ENCODE measurements at regions of chr16 and their contacts with region 1.

Region 1: DNA sequence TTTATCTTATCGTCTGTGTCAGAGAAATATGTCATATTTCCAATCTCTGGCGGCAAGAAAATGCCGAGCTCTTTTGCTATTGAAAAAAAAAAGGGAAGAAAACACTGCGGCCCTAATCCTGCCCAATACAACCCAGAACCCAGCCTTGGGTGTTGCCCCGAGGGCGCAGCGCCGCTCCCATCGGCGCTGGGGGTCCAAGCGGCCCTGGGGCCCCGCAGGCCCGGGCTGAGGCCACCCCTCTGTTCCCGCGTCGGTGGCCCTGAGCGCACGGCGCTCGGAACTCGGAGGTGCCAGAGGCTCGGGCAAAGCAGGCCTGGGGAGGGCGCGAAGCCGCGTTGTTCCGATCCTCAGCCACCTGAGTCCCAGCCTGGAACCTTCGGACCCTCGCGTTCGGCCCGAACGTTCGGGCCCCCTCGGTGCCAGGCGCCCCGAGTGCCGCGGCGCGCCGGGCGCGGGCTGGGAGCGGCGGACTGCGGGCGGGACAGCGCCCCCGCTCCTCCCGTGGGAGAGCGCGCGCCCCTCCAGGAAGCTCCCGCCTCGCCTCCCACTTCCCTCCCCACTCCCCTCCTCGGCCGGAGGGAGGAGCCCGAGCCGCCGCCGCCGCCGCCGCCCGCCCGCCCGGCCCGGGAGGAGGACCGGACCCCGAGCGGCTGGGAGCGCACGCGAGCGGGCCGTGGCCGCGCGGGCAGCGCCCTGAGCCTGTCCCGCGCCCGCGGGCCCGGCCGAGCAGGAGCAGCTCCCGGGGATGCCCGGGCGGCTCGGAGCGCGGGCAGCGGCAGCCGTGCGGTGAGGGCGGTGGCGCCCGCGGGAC is at the start of gene CPNE2:
- DNase-seq: no peak
- H3K4me3 ChIP-seq: peak within 1 kb of the TSS; percentile 75 to 99 (median 87)
- H3K27ac ChIP-seq: peak within 1 kb of the TSS; percentile 81 to 88 (median 84)
- H3K4me1 ChIP-seq: peaks cover 15 to 40% (median 29%) of the 10 kb centered on the region in 4 donors
- H3K27me3 ChIP-seq: no peaks in the 10 kb centered on the region
- CTCF ChIP-seq: peak in 1 of 3 experiments; percentile 11
- EP300 ChIP-seq: no peak
- POLR2A ChIP-seq: no peak
- total RNA-seq, gene CPNE2: 21.6 to 43.0 (median 34.9) TPM

Region 2: DNA sequence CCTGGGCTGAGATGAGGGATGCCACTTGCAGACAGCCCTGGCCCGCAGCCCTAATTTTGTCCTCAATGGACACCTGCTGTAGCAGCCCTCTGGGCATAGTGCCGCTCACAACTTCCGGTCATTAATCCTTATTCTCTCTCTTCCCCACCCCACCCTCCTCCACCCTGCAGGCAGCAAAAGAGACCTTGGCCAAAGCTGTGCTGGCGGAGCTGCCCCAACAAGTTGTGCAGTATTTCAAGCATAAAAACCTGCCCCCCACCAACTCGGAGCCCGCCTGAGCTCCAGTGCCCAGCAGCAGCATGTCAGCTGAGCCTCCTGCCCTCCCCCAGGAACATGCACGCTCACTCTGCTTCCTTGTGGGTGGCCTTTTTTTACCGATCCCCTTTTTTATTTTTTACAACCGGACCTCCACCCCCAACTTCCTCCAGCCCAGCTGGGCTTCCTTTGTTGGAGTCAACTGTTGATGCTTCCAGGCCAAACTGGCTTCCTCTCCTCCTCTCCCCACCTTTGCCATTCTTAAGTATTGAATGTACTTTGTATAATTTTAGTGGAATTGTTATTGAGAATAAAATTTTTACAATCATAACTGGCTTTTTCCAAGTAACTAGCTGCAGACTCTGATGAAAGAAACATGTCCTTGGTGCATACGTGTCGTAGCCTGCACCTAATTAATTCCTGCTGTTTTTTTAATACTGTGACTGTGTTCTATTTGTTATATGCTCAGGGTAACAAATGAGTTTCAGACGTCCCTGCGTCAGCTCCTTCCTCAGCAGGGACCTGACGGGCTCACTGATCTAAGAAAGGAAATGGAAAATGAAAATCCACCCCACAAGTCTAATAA is 55.4 kb after region 1 on chr16:
- intact Hi-C with region 1: no loop called
- DNase-seq: no peak
- H3K4me3 ChIP-seq: no peak overlapping the region
- H3K27ac ChIP-seq: peak overlapping the region in 2 of 4 donors; percentile 17 to 38
- H3K4me1 ChIP-seq: peaks cover 44 to 59% (median 52%) of the 10 kb centered on the region in 4 donors
- H3K27me3 ChIP-seq: no peaks in the 10 kb centered on the region
- CTCF ChIP-seq: no peak
- EP300 ChIP-seq: no peak
- POLR2A ChIP-seq: no peak

Region 3: GRCh38 chr16:57244767-57245471 is 152.7 kb after region 1 on chr16 and contains the start of gene ARL2BP:
- intact Hi-C with region 1: loop called (anchors 10 kb)
- DNase-seq: peak; percentile 99
- H3K4me3 ChIP-seq: peak within 1 kb of the TSS; percentile 80 to 90 (median 82)
- H3K27ac ChIP-seq: peak within 1 kb of the TSS; percentile 92 to 95 (median 94)
- H3K4me1 ChIP-seq: peaks cover 13 to 23% (median 21%) of the 10 kb centered on the region in 4 donors
- H3K27me3 ChIP-seq: no peaks in the 10 kb centered on the region
- CTCF ChIP-seq: peak in 1 of 3 experiments; percentile 7
- EP300 ChIP-seq: no peak
- POLR2A ChIP-seq: no peak
- total RNA-seq, gene ARL2BP: 58.1 to 77.4 (median 66.9) TPM

Region 4: GRCh38 chr16:57422026-57422944 is 330.1 kb after region 1 on chr16:
- intact Hi-C with region 1: loop called (anchors 5 kb)
- DNase-seq: no peak
- H3K4me3 ChIP-seq: no peak overlapping the region
- H3K27ac ChIP-seq: peak overlapping the region; percentile 9 to 57 (median 40)
- H3K4me1 ChIP-seq: peaks cover 36 to 46% (median 42%) of the 10 kb centered on the region in 4 donors
- H3K27me3 ChIP-seq: no peaks in the 10 kb centered on the region
- CTCF ChIP-seq: peak; percentile 72 to 78 (median 76)
- EP300 ChIP-seq: no peak
- POLR2A ChIP-seq: no peak